ENCODE measurements at regions of chr3 and their contacts with region 1.

Region 1: GRCh38 chr3:192467230-192468140 is 259.9 kb downstream of the FGF12 start:
- DNase-seq: no peak
- ATAC-seq: peak; percentile 81
- H3K4me3 Mint-ChIP-seq: no peak overlapping the region
- H3K27ac Mint-ChIP-seq: no peak overlapping the region
- H3K4me1 Mint-ChIP-seq: no peaks in the 10 kb centered on the region
- H3K27me3 Mint-ChIP-seq: peaks cover 24% of the 10 kb centered on the region
- CTCF ChIP-seq: peak; percentile 90

Region 2: GRCh38 chr3:192372616-192373015 is 94.9 kb before region 1 on chr3:
- CTCF ChIA-PET with region 1: no interaction called
- POLR2A ChIA-PET with region 1: no interaction called
- intact Hi-C with region 1: no loop called
- DNase-seq: no peak
- ATAC-seq: no peak
- H3K4me3 Mint-ChIP-seq: no peak overlapping the region
- H3K27ac Mint-ChIP-seq: no peak overlapping the region
- H3K4me1 Mint-ChIP-seq: no peaks in the 10 kb centered on the region
- H3K27me3 Mint-ChIP-seq: no peaks in the 10 kb centered on the region
- CTCF ChIP-seq: no peak

Region 3: DNA sequence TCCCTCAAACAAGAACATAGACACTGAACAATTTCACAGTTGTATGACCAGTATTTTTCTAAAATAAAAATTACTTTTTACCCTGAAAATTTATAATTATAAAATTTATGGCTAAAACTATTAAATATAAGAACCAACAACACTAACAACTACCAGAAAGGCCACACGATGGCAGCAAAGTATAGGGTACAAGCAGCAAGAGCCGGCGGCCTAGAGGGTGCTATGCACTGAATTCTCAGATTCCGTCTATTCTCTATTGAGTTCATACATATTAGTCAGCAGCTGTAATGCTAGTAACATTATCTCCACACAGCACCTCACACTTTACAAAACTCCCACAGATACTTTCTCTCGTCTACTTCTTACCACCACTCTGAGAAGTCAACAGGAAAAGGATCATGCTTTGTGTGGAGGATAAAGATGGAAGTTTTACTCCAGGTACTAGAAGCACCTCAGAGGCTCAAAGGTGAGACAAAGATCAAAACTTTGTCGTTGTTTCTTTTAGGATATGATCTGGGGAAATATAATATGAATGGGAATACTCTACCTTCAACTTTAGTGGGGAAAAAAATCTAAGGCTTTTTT is 99.3 kb after region 1 on chr3:
- CTCF ChIA-PET with region 1: no interaction called
- POLR2A ChIA-PET with region 1: no interaction called
- intact Hi-C with region 1: loop called (anchors 1 kb)
- DNase-seq: no peak
- ATAC-seq: no peak
- H3K4me3 Mint-ChIP-seq: no peak overlapping the region
- H3K27ac Mint-ChIP-seq: no peak overlapping the region
- H3K4me1 Mint-ChIP-seq: peaks cover 8% of the 10 kb centered on the region
- H3K27me3 Mint-ChIP-seq: peaks cover 15% of the 10 kb centered on the region
- CTCF ChIP-seq: peak; percentile 17

Region 4: GRCh38 chr3:193040836-193041672 is 573.6 kb after region 1 on chr3:
- CTCF ChIA-PET with region 1: interaction called, 4 read pairs
- POLR2A ChIA-PET with region 1: no interaction called
- intact Hi-C with region 1: loop called (anchors 1 kb)
- DNase-seq: no peak
- ATAC-seq: no peak
- H3K4me3 Mint-ChIP-seq: no peak overlapping the region
- H3K27ac Mint-ChIP-seq: no peak overlapping the region
- H3K4me1 Mint-ChIP-seq: no peaks in the 10 kb centered on the region
- H3K27me3 Mint-ChIP-seq: no peaks in the 10 kb centered on the region
- CTCF ChIP-seq: no peak

Region 5: DNA sequence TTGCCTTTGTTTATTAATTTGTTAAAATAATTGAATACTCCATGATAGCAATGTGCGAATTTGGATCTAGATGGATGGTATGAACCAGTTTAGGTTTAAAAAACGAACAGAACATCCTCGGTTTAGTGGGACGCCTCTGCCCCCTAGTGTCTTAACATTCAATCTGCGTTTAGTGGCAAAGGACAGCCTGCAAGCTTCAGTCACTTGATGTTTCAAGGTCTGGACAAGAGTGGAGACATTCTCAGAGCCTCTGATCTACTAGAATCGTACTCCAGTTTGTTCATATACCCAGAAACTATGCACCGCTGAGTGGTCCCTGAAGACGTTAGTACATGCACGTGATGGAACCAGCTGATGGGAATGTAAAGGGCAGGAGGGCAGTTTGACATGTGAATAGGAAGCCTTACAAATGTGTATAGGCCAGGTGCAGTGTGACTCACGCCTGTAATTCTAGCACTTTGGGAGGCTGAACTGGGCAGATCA is 1105.0 kb after region 1 on chr3:
- CTCF ChIA-PET with region 1: interaction called, 7 read pairs
- POLR2A ChIA-PET with region 1: no interaction called
- intact Hi-C with region 1: loop called (anchors 1 kb)
- DNase-seq: no peak
- ATAC-seq: peak; percentile 52
- H3K4me3 Mint-ChIP-seq: no peak overlapping the region
- H3K27ac Mint-ChIP-seq: no peak overlapping the region
- H3K4me1 Mint-ChIP-seq: no peaks in the 10 kb centered on the region
- H3K27me3 Mint-ChIP-seq: no peaks in the 10 kb centered on the region
- CTCF ChIP-seq: peak; percentile 54

Region 6: GRCh38 chr3:194344012-194344411 is 1876.5 kb after region 1 on chr3:
- CTCF ChIA-PET with region 1: no interaction called
- POLR2A ChIA-PET with region 1: no interaction called
- intact Hi-C with region 1: loop called (anchors 2 kb)
- DNase-seq: peak; percentile 58
- ATAC-seq: peak; percentile 66
- H3K4me3 Mint-ChIP-seq: no peak overlapping the region
- H3K27ac Mint-ChIP-seq: no peak overlapping the region
- H3K4me1 Mint-ChIP-seq: no peaks in the 10 kb centered on the region
- H3K27me3 Mint-ChIP-seq: peaks cover 8% of the 10 kb centered on the region
- CTCF ChIP-seq: no peak

Measured in activated B cell treated with CpG ODN at 0.5 μM for 24 hours (primary cell).